Mammary epithelial cell (primary cell): ENCODE measurements at regions of chr14 and their contacts with region 1.

Region 1: GRCh38 chr14:93939304-93940229 is 12.4 kb downstream of the FAM181A start:
- DNase-seq: peak; percentile 71
- H3K4me3 ChIP-seq: peak overlapping the region in 1 of 3 experiments; percentile 16
- H3K27ac ChIP-seq: no peak overlapping the region
- H3K4me1 ChIP-seq: peaks cover 54% of the 10 kb centered on the region
- H3K27me3 ChIP-seq: no peaks in the 10 kb centered on the region
- CTCF ChIP-seq: peak; percentile 28 to 52

Region 2: DNA sequence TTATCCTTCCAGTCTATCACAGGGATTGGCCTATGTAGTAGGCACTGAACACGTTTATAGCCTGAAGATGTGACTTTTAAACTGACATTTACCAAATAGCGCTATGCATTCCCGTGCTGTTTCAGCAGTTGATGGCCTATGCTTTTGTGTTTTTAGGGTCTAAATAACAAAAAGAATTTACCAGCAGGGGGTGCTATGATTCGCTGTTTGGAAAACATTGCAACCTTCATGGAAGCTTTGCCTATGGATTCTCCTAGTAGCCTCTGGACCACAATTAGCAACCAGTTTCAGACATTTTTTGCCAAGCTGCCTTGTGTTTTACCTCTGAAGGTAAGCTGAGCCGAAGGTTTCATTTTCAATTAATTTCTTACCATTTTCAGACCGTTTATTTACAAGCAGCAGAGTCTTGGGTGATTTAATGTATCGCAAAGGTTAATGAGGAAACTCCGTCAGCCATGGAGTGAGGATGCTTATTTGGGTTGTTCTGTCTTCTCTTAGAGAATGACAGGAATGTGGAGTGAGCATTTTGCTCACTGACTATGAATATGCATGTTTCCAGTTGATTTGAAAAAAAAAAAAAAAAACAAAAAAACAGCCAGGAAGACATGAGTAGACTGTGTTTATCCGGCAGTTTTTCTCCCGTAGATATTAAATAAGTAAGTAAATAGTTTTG is 284.4 kb before region 1 on chr14:
- CTCF ChIA-PET with region 1: no interaction called
- dilution Hi-C with region 1: no loop called
- in situ Hi-C with region 1: no loop called
- intact Hi-C with region 1: loop called (anchors 1 kb)
- DNase-seq: peak; percentile 40
- H3K4me3 ChIP-seq: no peak overlapping the region
- H3K27ac ChIP-seq: no peak overlapping the region
- H3K4me1 ChIP-seq: no peaks in the 10 kb centered on the region
- H3K27me3 ChIP-seq: no peaks in the 10 kb centered on the region
- CTCF ChIP-seq: peak; percentile 39 to 57

Region 3: GRCh38 chr14:93970549-93970946 is 31.0 kb after region 1 on chr14:
- CTCF ChIA-PET with region 1: interaction called, 13 read pairs
- dilution Hi-C with region 1: loop called (anchors 5 kb)
- in situ Hi-C with region 1: no loop called
- intact Hi-C with region 1: loop called (anchors 1 kb)
- DNase-seq: peak; percentile 42
- H3K4me3 ChIP-seq: no peak overlapping the region
- H3K27ac ChIP-seq: no peak overlapping the region
- H3K4me1 ChIP-seq: peaks cover 11% of the 10 kb centered on the region
- H3K27me3 ChIP-seq: no peaks in the 10 kb centered on the region
- CTCF ChIP-seq: peak; percentile 39 to 58

Region 4: DNA sequence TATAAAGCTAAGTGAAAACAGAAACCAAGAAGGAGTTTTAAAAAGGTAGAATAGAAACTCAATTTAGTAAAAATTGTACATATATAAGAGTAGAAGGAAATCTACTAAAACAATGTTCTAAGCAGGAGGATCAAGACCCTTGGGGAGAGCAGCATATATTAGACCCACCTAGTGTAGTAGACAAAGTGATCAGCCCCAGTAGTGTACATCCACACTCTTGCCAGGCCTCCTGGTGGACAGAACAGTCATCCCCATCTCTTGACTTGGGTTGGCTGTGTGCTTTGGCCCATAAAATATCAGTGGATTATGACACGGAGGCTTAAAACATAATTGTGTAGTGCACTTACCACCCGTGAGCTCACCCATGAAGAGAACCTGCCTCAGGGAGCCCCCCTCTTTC is 75.7 kb after region 1 on chr14:
- CTCF ChIA-PET with region 1: no interaction called
- dilution Hi-C with region 1: loop called (anchors 5 kb)
- in situ Hi-C with region 1: no loop called
- intact Hi-C with region 1: no loop called
- DNase-seq: no peak
- H3K4me3 ChIP-seq: no peak overlapping the region
- H3K27ac ChIP-seq: no peak overlapping the region
- H3K4me1 ChIP-seq: no peaks in the 10 kb centered on the region
- H3K27me3 ChIP-seq: no peaks in the 10 kb centered on the region
- CTCF ChIP-seq: no peak

Region 5: GRCh38 chr14:94173885-94174603 is 234.5 kb after region 1 on chr14 and contains the start of gene PPP4R4:
- CTCF ChIA-PET with region 1: no interaction called
- dilution Hi-C with region 1: no loop called
- in situ Hi-C with region 1: no loop called
- intact Hi-C with region 1: loop called (anchors 5 kb)
- DNase-seq: peak; percentile 71
- H3K4me3 ChIP-seq: peak within 1 kb of the TSS; percentile 68 to 87 (median 70)
- H3K27ac ChIP-seq: peak within 1 kb of the TSS; percentile 45
- H3K4me1 ChIP-seq: peaks cover 45% of the 10 kb centered on the region
- H3K27me3 ChIP-seq: no peaks in the 10 kb centered on the region
- CTCF ChIP-seq: no peak
- total RNA-seq, gene PPP4R4: 6.3 to 19.3 TPM